ENCODE measurements at regions of chr15 and their contacts with region 1.

Region 1: DNA sequence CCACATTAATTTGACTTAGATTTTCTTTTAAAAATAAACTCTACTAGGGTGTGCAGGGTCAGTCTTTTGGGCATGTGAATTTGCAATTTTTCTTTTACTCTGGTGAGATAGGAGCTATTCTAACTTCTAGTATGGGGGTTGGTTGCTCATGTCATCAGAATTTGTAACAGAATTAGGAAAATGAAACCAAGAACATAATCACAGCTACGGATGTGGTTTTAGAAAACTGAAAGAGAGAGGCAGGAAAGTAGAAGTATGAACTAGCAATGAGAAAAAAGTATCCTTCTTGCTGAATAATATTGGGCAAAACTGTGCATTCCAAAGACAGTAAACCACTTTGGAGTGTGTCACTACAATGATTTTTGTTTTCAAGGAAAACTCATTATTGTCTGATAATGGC is 43.3 kb downstream of the ADPGK start:
- DNase-seq: no peak
- H3K4me3 Mint-ChIP-seq: no peak overlapping the region
- H3K27ac Mint-ChIP-seq: peak overlapping the region; percentile 43
- H3K4me1 Mint-ChIP-seq: peaks cover 35% of the 10 kb centered on the region
- H3K27me3 Mint-ChIP-seq: no peaks in the 10 kb centered on the region

Region 2: GRCh38 chr15:72770673-72771328 is 30.6 kb after region 1 on chr15:
- CTCF ChIA-PET with region 1: no interaction called
- POLR2A ChIA-PET with region 1: no interaction called
- intact Hi-C with region 1: loop called (anchors 1 kb)
- DNase-seq: no peak
- H3K4me3 Mint-ChIP-seq: no peak overlapping the region
- H3K27ac Mint-ChIP-seq: peak overlapping the region; percentile 61
- H3K4me1 Mint-ChIP-seq: peaks cover 34% of the 10 kb centered on the region
- H3K27me3 Mint-ChIP-seq: no peaks in the 10 kb centered on the region

Region 3: GRCh38 chr15:73991726-73992593 is 1251.7 kb after region 1 on chr15 and contains the start of gene STOML1:
- CTCF ChIA-PET with region 1: no interaction called
- POLR2A ChIA-PET with region 1: no interaction called
- intact Hi-C with region 1: no loop called
- DNase-seq: peak; percentile 97
- H3K4me3 Mint-ChIP-seq: peak within 1 kb of the TSS; percentile 80
- H3K27ac Mint-ChIP-seq: peak within 1 kb of the TSS; percentile 70
- H3K4me1 Mint-ChIP-seq: peaks cover 30% of the 10 kb centered on the region
- H3K27me3 Mint-ChIP-seq: no peaks in the 10 kb centered on the region
- total RNA-seq, gene STOML1: 7.1 to 10.1 TPM

Measured in activated CD4-positive, alpha-beta memory T cell treated with anti-CD3 and anti-CD28 coated beads for 36 hours (primary cell).